ENCODE measurements at regions of chr2 and their contacts with region 1.

Region 1: DNA sequence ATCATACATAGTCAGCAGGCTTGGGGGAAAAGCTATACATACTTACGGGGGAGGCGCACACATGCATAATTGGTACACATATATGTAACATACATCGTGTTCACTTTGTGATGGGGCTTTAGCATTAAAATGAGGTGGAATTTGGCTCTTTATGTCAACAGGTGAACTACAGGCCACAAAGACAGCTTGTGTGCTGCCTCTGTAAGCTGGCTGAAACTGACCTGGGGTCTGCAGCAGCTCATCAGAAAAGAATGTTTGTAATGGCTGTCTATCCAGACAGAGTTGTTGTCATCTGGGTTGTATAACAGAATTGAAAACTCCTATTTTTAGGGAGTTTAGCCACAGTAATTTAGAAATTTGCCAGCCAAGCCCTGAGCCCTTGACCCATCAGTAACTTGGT is 4.7 kb upstream of the KCNG3 start:
- DNase-seq: no peak
- ATAC-seq: no peak
- H3K4me3 Mint-ChIP-seq: no peak overlapping the region
- H3K27ac Mint-ChIP-seq: peak overlapping the region; percentile 68; the same call in 1 of the 2 replicates
- H3K4me1 Mint-ChIP-seq: peaks cover 40% of the 10 kb centered on the region
- H3K27me3 Mint-ChIP-seq: peaks cover 4% of the 10 kb centered on the region; the same call in 1 of the 2 replicates
- CTCF ChIP-seq: no peak

Region 2: DNA sequence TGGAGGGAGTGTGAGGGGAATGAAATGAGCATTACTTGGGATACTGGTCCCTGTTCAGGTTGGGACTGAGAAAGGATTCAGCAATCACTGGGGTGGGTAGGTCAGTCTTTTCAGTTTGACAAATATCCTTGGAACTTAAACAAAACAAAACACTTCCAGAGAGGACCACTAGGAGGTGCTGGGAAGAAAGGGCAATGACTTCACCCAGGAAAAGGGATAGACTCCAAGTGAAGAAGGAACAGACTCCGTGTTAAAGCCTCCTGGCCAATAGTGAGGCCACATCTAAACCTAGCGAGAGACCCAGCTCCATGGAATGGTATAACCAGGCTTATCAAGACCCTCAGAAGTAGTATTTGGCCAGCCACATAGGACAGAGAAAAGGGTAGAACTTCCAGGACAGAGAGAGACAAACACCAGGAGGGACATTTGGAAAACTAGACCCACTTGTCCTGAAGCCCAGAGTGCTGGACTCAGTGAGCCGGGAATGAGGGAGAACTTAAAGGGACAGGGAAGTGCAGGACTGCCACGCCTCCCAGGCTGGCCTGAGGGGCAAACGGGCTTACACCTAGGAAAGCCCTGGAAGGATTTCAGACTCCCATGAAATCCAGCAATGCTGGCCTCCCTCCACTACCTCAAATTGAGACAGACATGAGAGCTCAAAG is 14.9 kb after region 1 on chr2:
- CTCF ChIA-PET with region 1: interaction called, 10 read pairs
- POLR2A ChIA-PET with region 1: no interaction called
- DNase-seq: peak; percentile 34
- ATAC-seq: peak; percentile 93
- H3K4me3 Mint-ChIP-seq: no peak overlapping the region
- H3K27ac Mint-ChIP-seq: peak overlapping the region; percentile 77; the same call in 1 of the 2 replicates
- H3K4me1 Mint-ChIP-seq: peaks cover 20% of the 10 kb centered on the region
- H3K27me3 Mint-ChIP-seq: no peaks in the 10 kb centered on the region
- CTCF ChIP-seq: peak; percentile 70

Region 3: DNA sequence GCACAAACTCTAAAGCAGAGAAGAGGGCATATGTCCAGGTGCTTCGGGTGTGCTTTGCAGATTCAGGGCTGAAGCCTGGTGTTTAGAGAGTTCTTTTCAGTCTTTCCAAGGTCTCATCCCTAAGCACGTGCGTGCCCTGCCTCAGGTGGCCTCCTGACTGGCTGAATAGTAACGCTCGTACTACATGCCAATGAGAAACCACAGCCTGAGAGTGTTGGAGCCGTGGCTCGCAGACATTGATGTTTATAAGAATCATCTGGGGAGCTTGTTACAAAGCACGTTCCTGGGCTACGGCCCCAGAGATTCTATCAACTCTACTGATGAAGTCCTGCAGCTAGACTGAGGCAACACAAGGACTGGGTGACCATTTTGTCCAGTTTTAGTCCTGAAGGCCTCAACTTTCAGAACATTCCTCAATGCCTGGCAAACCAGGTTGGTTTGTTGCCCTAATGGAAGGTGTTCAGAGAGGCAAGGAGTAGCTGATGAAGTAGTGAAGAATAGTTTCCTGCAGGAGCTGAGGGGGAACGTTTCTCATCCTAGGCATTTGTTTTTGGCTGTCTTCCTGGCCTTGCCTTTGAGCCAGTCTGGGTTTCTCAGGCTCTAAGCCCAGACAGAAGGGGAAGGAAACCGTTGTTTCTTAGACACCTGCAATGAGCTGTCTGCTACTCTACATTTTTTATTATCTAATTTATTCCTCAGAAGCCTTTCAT is 325.4 kb after region 1 on chr2:
- CTCF ChIA-PET with region 1: no interaction called
- POLR2A ChIA-PET with region 1: no interaction called
- DNase-seq: no peak
- ATAC-seq: no peak
- H3K4me3 Mint-ChIP-seq: no peak overlapping the region
- H3K27ac Mint-ChIP-seq: no peak overlapping the region
- H3K4me1 Mint-ChIP-seq: 0 out of 2 replicates have a peak, but pooled peaks cover 4% of the 10 kb centered on the region
- H3K27me3 Mint-ChIP-seq: peaks cover 16% of the 10 kb centered on the region
- CTCF ChIP-seq: no peak

Measured in WTC11 (cell line).